ENCODE measurements at regions of chr6 and their contacts with region 1.

Region 1: GRCh38 chr6:14423330-14423729 is 305.8 kb downstream of the CD83 start:
- DNase-seq: no peak
- H3K4me3 Mint-ChIP-seq: no peak overlapping the region
- H3K27ac Mint-ChIP-seq: peak overlapping the region; percentile 78
- H3K4me1 Mint-ChIP-seq: peaks cover 42% of the 10 kb centered on the region
- H3K27me3 Mint-ChIP-seq: no peaks in the 10 kb centered on the region

Region 2: GRCh38 chr6:14210663-14211561 is 212.4 kb before region 1 on chr6:
- intact Hi-C with region 1: loop called (anchors 2 kb)
- DNase-seq: peak; percentile 92
- H3K4me3 Mint-ChIP-seq: peak overlapping the region; percentile 78
- H3K27ac Mint-ChIP-seq: peak overlapping the region; percentile 83
- H3K4me1 Mint-ChIP-seq: peaks cover 40% of the 10 kb centered on the region
- H3K27me3 Mint-ChIP-seq: no peaks in the 10 kb centered on the region

Region 3: GRCh38 chr6:14276667-14277404 is 146.5 kb before region 1 on chr6:
- intact Hi-C with region 1: loop called (anchors 1 kb)
- DNase-seq: peak; percentile 35
- H3K4me3 Mint-ChIP-seq: peak overlapping the region; percentile 22
- H3K27ac Mint-ChIP-seq: peak overlapping the region; percentile 92
- H3K4me1 Mint-ChIP-seq: peaks cover 49% of the 10 kb centered on the region
- H3K27me3 Mint-ChIP-seq: no peaks in the 10 kb centered on the region

Region 4: GRCh38 chr6:14333556-14334305 is 89.6 kb before region 1 on chr6:
- intact Hi-C with region 1: no loop called
- DNase-seq: no peak
- H3K4me3 Mint-ChIP-seq: no peak overlapping the region
- H3K27ac Mint-ChIP-seq: no peak overlapping the region
- H3K4me1 Mint-ChIP-seq: peaks cover 6% of the 10 kb centered on the region
- H3K27me3 Mint-ChIP-seq: no peaks in the 10 kb centered on the region

Region 5: GRCh38 chr6:14375930-14376329 is 47.4 kb before region 1 on chr6:
- intact Hi-C with region 1: loop called (anchors 2 kb)
- DNase-seq: no peak
- H3K4me3 Mint-ChIP-seq: no peak overlapping the region
- H3K27ac Mint-ChIP-seq: no peak overlapping the region
- H3K4me1 Mint-ChIP-seq: peaks cover 49% of the 10 kb centered on the region
- H3K27me3 Mint-ChIP-seq: no peaks in the 10 kb centered on the region

Region 6: DNA sequence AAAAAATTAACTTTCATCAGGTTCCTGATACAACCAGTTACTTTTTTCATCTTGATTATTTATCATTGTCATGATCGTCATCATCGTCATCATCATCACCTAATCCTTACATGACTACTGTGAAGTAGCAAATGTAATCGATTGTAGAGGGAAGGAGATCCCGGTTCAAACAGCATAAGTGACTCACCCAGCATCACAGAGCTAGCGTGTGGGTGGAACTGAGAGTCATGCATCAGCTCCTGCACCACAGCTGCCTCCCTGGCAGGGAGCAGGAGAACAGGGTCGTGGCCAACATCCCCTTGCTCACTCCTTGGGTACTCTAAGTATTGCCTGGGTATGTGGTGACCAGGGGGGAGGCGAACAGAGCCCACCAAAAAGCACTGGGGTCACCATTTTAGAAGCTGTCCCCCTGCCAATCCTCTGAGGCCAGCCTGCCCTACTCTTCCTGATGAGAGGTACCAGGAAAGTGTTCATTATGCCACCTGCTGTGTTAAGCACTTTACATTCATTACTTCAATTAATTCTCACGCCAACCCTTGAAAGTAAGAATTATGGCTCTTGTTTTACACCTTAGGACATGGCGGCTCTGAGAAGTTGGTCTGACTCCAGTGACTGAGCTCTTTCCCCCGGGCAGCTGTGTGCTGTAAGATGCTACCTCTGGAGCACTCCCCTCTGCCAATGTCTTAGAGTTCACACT is 119.5 kb after region 1 on chr6:
- intact Hi-C with region 1: loop called (anchors 1 kb)
- DNase-seq: peak; percentile 23
- H3K4me3 Mint-ChIP-seq: no peak overlapping the region
- H3K27ac Mint-ChIP-seq: peak overlapping the region; percentile 76
- H3K4me1 Mint-ChIP-seq: peaks cover 31% of the 10 kb centered on the region
- H3K27me3 Mint-ChIP-seq: no peaks in the 10 kb centered on the region

Region 7: DNA sequence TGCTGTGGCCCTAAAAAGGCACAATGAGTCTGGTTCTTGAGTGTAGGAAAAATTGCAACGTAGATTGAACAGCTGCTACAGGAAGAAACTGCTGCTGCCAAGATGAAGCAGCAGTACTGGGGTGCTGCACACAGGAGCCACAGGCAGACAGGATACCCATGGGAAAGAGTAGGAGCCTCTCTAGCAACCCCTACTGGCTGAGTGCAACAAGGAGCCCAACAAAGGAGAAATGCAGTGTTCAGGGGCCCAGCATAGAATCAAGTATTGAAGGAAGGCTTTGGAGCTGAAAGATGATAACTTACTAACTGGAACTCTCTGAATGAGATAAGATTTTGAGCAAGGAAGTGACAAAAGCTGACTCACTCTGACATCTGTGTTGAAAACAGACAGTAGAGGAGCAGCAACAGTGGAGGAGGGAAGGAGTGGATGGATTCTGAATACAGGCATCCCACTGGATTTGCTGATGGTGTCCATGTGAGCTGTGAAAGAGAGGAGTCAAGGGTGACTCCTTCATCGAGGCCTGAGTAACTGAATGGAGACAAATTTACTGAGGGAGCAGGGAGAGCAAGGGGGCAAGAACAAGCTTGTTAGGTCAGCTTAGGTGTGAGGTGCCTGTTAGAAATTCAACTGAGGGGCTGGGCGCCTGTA is 287.9 kb after region 1 on chr6:
- intact Hi-C with region 1: loop called (anchors 1 kb)
- DNase-seq: peak; percentile 63
- H3K4me3 Mint-ChIP-seq: peak overlapping the region; percentile 75
- H3K27ac Mint-ChIP-seq: peak overlapping the region; percentile 99
- H3K4me1 Mint-ChIP-seq: peaks cover 60% of the 10 kb centered on the region
- H3K27me3 Mint-ChIP-seq: no peaks in the 10 kb centered on the region

Region 8: GRCh38 chr6:15299430-15300131 is 876.3 kb after region 1 on chr6:
- intact Hi-C with region 1: loop called (anchors 10 kb)
- DNase-seq: peak; percentile 46
- H3K4me3 Mint-ChIP-seq: peak overlapping the region; percentile 53
- H3K27ac Mint-ChIP-seq: peak overlapping the region; percentile 68
- H3K4me1 Mint-ChIP-seq: peaks cover 74% of the 10 kb centered on the region
- H3K27me3 Mint-ChIP-seq: no peaks in the 10 kb centered on the region

Measured in activated T-helper 2 cell treated with anti-CD3 and anti-CD28 coated beads, Interferon-gamma antibody, Interleukin-2, Interleukin-4, amounts not matched to agents 10 μg/mL and 5 μg/mL and 100 μg/mL, durations not matched to agents 14 hours and 24 hours and 36 hours (primary cell).